ENCODE measurements at regions of chr19 and their contacts with region 1.

Region 1: GRCh38 chr19:48480558-48481500 is 11.7 kb downstream of the CYTH2 start:
- DNase-seq: peak in 13 of 14 experiments; percentile 32 to 77 (median 57)
- ATAC-seq: peak; percentile 81
- H3K4me3 ChIP-seq: peak overlapping the region; percentile 71
- H3K4me3 Mint-ChIP-seq: peak overlapping the region; percentile 88
- H3K27ac ChIP-seq: peak overlapping the region; percentile 77 to 79
- H3K27ac Mint-ChIP-seq: peak overlapping the region; percentile 88
- H3K4me1 ChIP-seq: peaks cover 22% of the 10 kb centered on the region
- H3K4me1 Mint-ChIP-seq: peaks cover 27% of the 10 kb centered on the region
- H3K27me3 ChIP-seq: no peaks in the 10 kb centered on the region
- H3K27me3 Mint-ChIP-seq: no peaks in the 10 kb centered on the region
- CTCF ChIP-seq: no peak

Region 2: DNA sequence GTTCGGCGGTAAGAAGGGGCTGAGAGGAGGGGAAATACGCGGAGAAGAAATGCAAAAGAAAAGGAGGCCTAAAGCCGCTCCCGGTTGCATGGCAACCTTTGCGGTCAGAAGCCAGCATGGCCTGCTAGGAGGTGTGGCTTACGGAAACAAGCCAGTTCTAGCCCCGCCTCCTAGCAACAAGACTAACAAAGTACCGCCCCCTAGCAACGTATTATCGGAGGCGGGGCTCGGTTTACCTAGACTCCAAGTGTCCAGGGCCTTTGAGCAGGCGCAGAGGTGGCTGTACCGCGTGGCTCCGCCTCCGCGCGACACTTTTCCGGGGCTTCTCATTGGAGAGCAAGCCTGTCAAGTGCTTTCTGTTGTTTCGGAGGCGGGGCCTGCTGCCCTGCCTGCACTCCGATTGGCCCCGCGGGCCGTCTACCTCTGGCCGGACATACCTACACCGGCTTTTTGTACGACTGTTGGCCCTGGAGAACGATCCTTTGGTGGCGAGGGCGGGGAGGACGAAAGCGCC is 12.0 kb before region 1 on chr19:
- CTCF ChIA-PET with region 1: no interaction called
- POLR2A ChIA-PET with region 1: interaction called, 18 read pairs
- intact Hi-C with region 1: no loop called
- DNase-seq: peak; percentile 98 to 100 (median 99)
- ATAC-seq: peak; percentile 89
- H3K4me3 ChIP-seq: peak overlapping the region; percentile 96
- H3K4me3 Mint-ChIP-seq: peak overlapping the region; percentile 90
- H3K27ac ChIP-seq: peak overlapping the region; percentile 25 to 79
- H3K27ac Mint-ChIP-seq: peak overlapping the region; percentile 82
- H3K4me1 ChIP-seq: peaks cover 22% of the 10 kb centered on the region
- H3K4me1 Mint-ChIP-seq: peaks cover 21% of the 10 kb centered on the region
- H3K27me3 ChIP-seq: no peaks in the 10 kb centered on the region
- H3K27me3 Mint-ChIP-seq: no peaks in the 10 kb centered on the region
- CTCF ChIP-seq: no peak

Region 3: DNA sequence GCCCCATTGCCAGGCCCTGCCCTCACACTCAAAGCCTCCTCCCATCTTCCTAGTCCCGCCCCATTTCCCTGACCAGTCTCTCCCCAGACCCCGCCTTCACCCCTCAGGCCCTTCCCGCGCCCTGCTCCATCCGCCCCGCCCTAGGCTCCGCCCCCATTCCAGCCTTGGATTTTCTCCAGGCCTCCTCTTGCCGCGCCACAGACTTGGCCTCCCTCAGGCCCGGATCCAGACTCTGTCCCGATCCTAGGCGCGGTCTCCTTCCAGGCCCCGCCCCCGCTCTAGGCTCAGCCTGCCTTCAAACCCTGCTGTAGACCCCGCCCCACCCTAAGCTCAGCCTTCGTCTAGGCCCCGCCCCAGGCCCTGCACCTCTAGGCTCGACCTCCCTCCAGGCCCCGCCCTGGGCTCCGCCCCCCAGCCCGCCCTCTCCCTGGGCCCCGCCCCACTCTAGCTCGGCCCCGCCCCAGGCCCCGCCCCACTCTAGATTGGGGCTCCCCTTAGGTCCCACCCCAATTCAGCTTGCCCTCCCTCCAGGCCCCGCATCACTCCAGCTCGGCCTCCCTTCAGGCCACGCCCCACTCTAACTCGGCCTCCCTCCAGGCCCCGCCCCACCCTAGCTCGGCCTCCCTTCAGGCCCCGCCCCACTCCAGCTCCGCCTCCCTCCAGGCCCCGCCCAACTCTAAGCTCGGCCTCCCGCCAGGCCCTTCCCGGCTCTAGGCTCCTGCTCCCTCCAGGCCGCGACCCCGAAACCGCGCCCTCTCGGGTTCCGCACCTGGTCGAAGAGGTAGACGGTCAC is 12.3 kb after region 1 on chr19:
- CTCF ChIA-PET with region 1: interaction called, 8 read pairs
- POLR2A ChIA-PET with region 1: interaction called, 12 read pairs
- intact Hi-C with region 1: no loop called
- DNase-seq: peak; percentile 61 to 92 (median 78)
- ATAC-seq: peak; percentile 76
- H3K4me3 ChIP-seq: peak overlapping the region; percentile 50
- H3K4me3 Mint-ChIP-seq: peak overlapping the region; percentile 83
- H3K27ac ChIP-seq: no peak overlapping the region
- H3K27ac Mint-ChIP-seq: peak overlapping the region; percentile 52
- H3K4me1 ChIP-seq: peaks cover 60% of the 10 kb centered on the region
- H3K4me1 Mint-ChIP-seq: peaks cover 49% of the 10 kb centered on the region
- H3K27me3 ChIP-seq: peaks cover 0 to 40% of the 10 kb centered on the region in 2 experiments
- H3K27me3 Mint-ChIP-seq: peaks cover 53% of the 10 kb centered on the region
- CTCF ChIP-seq: no peak

Region 4: DNA sequence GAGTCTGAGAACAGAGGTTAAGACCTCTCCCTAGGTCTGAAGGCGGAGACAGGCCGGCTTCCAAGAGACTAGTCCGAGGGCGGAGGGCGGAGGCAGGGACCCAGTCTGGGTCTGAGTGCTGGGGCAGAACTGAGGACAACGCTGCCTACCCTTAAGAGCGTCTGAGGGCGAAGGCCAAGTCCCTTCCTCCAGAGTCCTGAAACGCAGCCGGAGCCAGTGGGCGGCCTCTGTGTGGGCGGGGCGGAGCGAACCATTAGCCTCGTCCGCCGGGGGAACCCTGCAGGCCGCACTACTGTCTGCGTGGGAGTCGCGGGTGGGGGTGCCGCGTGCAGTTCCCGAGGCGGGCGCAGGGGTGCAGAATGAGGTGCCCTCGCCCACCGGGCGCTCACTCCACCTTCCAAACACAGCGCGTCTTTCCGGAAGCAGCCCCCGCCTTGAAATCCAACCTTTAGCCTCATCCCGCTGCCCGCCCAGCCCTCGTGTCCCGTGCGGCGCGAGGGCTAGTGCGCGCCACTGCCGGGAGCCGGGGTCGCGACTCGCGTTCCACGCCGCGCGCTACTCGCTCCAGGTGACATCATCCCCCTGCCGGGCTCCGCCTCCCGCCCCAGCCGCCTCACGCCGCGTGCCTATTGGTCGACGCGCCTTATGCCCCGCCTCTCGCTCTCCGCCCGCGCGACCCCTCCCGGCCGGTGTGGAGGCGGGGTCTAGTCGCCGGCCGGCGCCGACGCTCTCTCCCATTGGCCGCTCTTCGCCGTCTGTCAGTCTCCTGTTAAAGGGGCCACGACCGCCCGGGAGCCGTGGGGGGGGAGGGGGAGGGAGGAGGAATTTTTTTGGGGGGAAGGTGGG is 638.0 kb after region 1 on chr19 and contains the start of gene C19orf73:
- CTCF ChIA-PET with region 1: no interaction called
- POLR2A ChIA-PET with region 1: no interaction called
- intact Hi-C with region 1: loop called in 1 of 2 experiments (anchors 10 kb)
- DNase-seq: peak; percentile 91 to 99 (median 95)
- ATAC-seq: peak; percentile 78
- H3K4me3 ChIP-seq: peak within 1 kb of the TSS; percentile 69
- H3K4me3 Mint-ChIP-seq: peak within 1 kb of the TSS; percentile 92
- H3K27ac ChIP-seq: peak within 1 kb of the TSS; percentile 89 to 92
- H3K27ac Mint-ChIP-seq: peak within 1 kb of the TSS; percentile 82
- H3K4me1 ChIP-seq: peaks cover 45% of the 10 kb centered on the region
- H3K4me1 Mint-ChIP-seq: peaks cover 41% of the 10 kb centered on the region
- H3K27me3 ChIP-seq: no peaks in the 10 kb centered on the region
- H3K27me3 Mint-ChIP-seq: no peaks in the 10 kb centered on the region
- CTCF ChIP-seq: peak; percentile 46
- total RNA-seq, gene C19orf73: 1.5 to 2.3 TPM

Measured in CD4-positive, alpha-beta T cell (primary cell).